Panc1 (cell line): ENCODE measurements at regions of chr7 and their contacts with region 1.

Region 1: DNA sequence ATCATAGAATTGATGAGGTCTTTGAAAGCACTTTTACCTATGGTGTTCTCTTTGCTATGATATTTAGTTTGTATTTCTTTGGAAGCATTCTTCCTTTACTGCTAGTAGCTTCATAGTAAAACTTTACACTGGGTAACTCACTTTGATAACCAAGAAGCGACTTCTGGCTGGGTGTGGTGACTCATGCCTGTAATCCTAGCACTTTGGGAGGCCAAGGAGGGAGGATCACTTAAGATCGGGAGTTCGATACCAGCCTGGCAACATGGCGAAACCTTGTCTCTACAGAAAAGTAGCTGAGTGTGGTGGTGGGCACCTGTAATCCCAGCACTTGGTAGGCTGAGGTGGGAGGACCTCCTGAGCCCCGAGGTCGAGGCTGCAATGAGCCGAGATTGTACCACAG is 36.2 kb downstream of the CCDC126 start:
- DNase-seq: no peak
- ATAC-seq: peak; percentile 12; the same call in 1 of the 2 replicates
- H3K4me3 ChIP-seq: no peak overlapping the region
- H3K27ac ChIP-seq: no peak overlapping the region
- H3K4me1 ChIP-seq: no peaks in the 10 kb centered on the region
- H3K27me3 ChIP-seq: no peaks in the 10 kb centered on the region
- CTCF ChIP-seq: no peak

Region 2: DNA sequence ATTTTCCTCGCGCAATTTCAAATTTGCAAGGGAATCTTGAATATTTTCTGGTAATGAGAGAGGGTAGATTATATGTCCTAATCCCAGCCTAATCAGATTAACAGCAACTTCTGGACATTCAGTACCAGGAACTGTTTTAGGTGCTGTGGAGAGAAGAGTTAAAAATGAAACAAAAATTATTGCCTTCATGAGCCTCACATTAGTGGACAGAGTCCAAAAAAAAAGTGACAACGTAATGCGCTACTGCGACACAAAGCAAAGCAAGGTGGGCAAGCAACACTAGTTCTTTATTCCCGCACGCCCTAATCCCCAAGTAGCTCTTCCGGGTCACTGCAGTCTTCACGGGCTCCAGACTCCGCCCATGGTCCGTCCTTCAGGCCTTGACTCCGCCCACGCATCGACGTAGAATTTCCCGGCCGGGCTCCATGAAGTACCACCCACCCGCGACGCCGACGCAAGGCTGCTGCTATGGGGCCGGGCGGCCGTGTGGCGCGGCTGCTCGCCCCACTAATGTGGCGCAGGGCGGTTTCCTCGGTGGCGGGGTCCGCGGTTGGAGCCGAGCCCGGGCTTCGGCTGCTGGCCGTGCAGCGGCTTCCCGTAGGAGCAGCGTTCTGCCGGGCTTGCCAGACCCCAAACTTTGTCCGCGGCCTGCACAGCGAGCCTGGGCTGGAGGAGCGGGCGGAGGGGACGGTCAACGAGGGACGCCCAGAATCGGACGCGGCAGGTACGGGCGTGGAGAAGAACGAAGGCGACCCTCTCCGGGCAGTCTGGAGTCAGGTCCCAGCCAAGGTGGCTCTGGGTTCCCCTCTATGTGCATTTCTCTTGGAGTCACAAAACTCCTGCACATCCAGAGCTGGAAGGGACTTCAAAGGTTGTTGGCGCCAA is 334.3 kb before region 1 on chr7 and contains the start of gene MALSU1:
- CTCF ChIA-PET with region 1: no interaction called
- POLR2A ChIA-PET with region 1: no interaction called
- in situ Hi-C with region 1: no loop called
- intact Hi-C with region 1: no loop called
- DNase-seq: peak; percentile 94
- ATAC-seq: peak; percentile 98
- H3K4me3 ChIP-seq: peak within 1 kb of the TSS; percentile 76 to 99
- H3K27ac ChIP-seq: peak within 1 kb of the TSS; percentile 97
- H3K4me1 ChIP-seq: peaks cover 13% of the 10 kb centered on the region
- H3K27me3 ChIP-seq: no peaks in the 10 kb centered on the region
- CTCF ChIP-seq: no peak
- total RNA-seq, gene MALSU1: 111 TPM

Region 3: GRCh38 chr7:24216576-24217125 is 583.2 kb after region 1 on chr7:
- CTCF ChIA-PET with region 1: no interaction called
- POLR2A ChIA-PET with region 1: no interaction called
- in situ Hi-C with region 1: no loop called
- intact Hi-C with region 1: no loop called
- DNase-seq: no peak
- ATAC-seq: no peak
- H3K4me3 ChIP-seq: no peak overlapping the region
- H3K27ac ChIP-seq: no peak overlapping the region
- H3K4me1 ChIP-seq: no peaks in the 10 kb centered on the region
- H3K27me3 ChIP-seq: no peaks in the 10 kb centered on the region; the same call in 1 of the 2 replicates
- CTCF ChIP-seq: no peak

Region 4: GRCh38 chr7:25117226-25118047 is 1484.0 kb after region 1 on chr7:
- CTCF ChIA-PET with region 1: no interaction called
- POLR2A ChIA-PET with region 1: interaction called, 12 read pairs
- in situ Hi-C with region 1: no loop called
- intact Hi-C with region 1: no loop called
- DNase-seq: no peak
- ATAC-seq: peak; percentile 68
- H3K4me3 ChIP-seq: no peak overlapping the region
- H3K27ac ChIP-seq: no peak overlapping the region
- H3K4me1 ChIP-seq: peaks cover 2% of the 10 kb centered on the region; the same call in 1 of the 2 replicates
- H3K27me3 ChIP-seq: no peaks in the 10 kb centered on the region
- CTCF ChIP-seq: no peak